ENCODE measurements at regions of chr13 and their contacts with region 1.

Region 1: DNA sequence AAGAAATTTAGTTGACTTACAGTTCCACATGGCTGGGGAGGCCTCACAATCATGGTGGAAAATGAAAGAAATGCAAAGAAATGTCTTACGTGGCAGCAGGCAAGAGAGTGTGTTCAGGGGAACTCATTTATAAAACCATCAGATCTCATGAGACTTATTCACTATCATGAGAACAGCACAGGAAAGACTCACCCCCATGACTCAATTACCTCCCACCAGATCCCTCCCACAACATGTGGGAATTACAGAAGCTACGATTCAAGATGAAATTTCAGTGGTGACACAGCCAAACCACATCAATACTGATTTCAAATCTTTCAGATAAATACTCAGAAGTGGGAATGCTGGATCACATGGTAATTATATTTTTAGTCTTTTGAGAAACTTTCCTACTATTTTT is 1357.9 kb downstream of the SLITRK5 start:
- DNase-seq: no peak

Region 2: DNA sequence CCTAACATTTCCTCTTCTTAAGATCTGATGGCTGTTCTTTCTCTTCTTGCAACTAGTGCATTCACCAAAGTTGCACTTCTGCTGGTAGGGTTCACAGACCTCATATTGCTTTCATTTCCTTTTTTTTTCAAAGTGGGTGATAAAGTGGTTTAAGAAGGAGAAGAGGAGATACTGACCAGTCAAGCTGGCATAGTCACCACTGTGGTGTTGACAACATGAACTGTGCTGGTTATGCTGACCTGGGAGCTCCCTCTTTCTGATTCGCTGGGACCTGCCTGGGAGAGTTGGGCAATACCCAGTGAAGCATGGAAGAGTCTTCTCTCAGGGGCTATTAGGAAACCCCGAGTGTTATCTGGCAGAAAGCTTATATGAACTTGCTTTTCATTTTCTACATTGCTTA is 1135.0 kb before region 1 on chr13:
- intact Hi-C with region 1: loop called in 1 of 2 experiments (anchors 5 kb)
- DNase-seq: no peak